Activated B cell treated with CpG ODN at 0.5 μM for 24 hours (primary cell): ENCODE measurements at regions of chr3 and their contacts with region 1.

Region 1: GRCh38 chr3:113745273-113746068 is 578 bp downstream of the NAA50 start:
- DNase-seq: peak; percentile 70
- ATAC-seq: peak; percentile 63
- H3K4me3 Mint-ChIP-seq: peak overlapping the region; percentile 93
- H3K27ac Mint-ChIP-seq: peak overlapping the region; percentile 100
- H3K4me1 Mint-ChIP-seq: peaks cover 74% of the 10 kb centered on the region
- H3K27me3 Mint-ChIP-seq: no peaks in the 10 kb centered on the region
- CTCF ChIP-seq: no peak

Region 2: DNA sequence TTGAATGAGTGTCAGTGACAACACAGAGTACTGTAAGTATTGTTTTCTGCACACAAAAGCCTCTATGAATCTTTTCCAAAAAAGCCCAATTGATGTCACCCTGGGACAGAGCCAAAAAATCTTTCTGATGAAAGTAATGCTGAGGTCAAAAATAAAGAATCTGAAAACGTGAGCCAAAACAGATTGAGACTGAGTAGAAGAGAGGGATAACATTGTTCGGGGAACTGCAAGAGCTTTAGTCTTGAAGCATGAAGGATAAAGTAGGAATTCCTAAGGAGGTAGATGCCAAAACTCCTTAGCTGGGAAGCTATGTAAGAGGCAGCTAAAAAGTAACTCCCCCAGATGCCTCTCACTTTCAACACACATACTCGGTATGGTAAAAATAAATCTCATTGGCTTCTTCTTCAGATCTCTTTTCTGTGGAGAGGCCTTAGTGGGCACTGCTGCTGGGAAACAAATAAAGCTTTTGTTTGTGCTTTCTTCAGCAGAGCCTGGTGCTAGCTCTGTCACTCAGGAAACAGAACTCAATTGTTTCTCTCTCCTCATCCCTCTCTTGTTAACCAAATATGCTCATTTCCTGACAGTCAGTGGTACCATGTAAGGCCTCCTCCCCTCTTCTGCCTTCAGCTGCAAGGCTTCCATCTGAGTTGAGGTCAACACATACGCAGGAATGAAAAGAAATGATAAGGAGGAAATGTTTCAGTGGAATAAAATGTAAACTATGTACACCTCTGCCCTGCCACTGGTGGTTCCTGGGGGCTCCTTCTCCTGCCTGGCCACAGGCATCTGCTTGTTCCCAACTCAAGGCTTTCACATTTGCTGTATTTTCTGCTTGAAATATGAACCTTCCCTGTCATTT is 1354.5 kb before region 1 on chr3:
- CTCF ChIA-PET with region 1: no interaction called
- POLR2A ChIA-PET with region 1: no interaction called
- intact Hi-C with region 1: no loop called
- DNase-seq: no peak
- ATAC-seq: no peak
- H3K4me3 Mint-ChIP-seq: no peak overlapping the region
- H3K27ac Mint-ChIP-seq: peak overlapping the region; percentile 78
- H3K4me1 Mint-ChIP-seq: peaks cover 40% of the 10 kb centered on the region
- H3K27me3 Mint-ChIP-seq: no peaks in the 10 kb centered on the region
- CTCF ChIP-seq: no peak

Region 3: GRCh38 chr3:112561731-112562688 is 1183.5 kb before region 1 on chr3 and contains the starts of genes ATG3 and SLC35A5:
- CTCF ChIA-PET with region 1: no interaction called
- POLR2A ChIA-PET with region 1: no interaction called
- intact Hi-C with region 1: loop called (anchors 5 kb)
- DNase-seq: peak; percentile 99
- ATAC-seq: peak; percentile 80
- H3K4me3 Mint-ChIP-seq: peak within 1 kb of the TSS; percentile 99
- H3K27ac Mint-ChIP-seq: peak within 1 kb of the TSS; percentile 99
- H3K4me1 Mint-ChIP-seq: peaks cover 50% of the 10 kb centered on the region
- H3K27me3 Mint-ChIP-seq: no peaks in the 10 kb centered on the region
- CTCF ChIP-seq: no peak
- total RNA-seq, gene ATG3: 48.3 and 54.9 TPM in 2 replicates
- total RNA-seq, gene SLC35A5: 25.1 and 26.6 TPM in 2 replicates

Region 4: DNA sequence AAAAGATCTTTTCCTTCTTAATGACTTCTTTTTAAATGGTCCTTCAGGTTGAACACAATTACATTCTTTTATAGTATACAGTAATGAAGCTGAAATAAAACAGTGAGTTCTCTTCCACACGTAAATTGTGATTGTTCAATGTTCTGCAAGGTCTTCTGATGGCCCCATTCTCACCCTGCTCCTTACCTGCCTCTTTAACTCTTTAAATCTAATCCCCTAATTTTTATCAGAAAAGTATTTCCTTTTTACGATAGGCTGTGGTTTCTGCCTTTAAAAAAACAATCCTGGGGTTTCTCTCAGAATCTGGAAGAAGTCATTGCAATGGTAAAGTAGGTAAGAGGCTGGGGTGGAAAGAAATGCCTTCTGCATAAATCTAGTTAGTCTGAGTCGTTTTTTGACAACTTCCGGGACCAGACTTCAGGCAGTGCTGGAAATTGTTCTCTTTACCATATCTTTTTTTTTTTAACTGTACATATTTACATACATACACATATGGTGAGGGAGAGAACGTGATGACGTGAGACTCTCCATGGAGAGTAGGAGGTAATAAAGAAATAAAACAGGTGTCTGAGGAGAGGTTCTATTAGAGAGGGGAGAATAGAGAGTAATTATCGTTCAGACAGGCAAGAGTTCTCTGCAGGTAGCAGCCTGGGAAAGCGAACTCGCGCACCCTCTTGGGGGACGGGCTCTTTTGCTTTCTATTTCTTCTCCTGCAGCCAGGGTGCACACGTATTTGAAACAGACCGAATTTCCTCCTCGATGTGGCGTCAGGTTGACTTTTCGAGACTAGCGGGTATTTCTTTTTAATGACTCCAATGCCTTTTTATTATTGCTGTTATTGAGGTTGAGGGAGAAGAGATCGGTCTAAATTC is 213.4 kb before region 1 on chr3 and contains the start of gene SIDT1:
- CTCF ChIA-PET with region 1: no interaction called
- POLR2A ChIA-PET with region 1: no interaction called
- intact Hi-C with region 1: loop called (anchors 1 kb)
- DNase-seq: peak; percentile 49
- ATAC-seq: peak; percentile 80
- H3K4me3 Mint-ChIP-seq: peak within 1 kb of the TSS; percentile 98
- H3K27ac Mint-ChIP-seq: peak within 1 kb of the TSS; percentile 100
- H3K4me1 Mint-ChIP-seq: peaks cover 47% of the 10 kb centered on the region
- H3K27me3 Mint-ChIP-seq: peaks cover 2% of the 10 kb centered on the region
- CTCF ChIP-seq: no peak
- total RNA-seq, gene SIDT1: 35.7 and 44.9 TPM in 2 replicates

Region 5: DNA sequence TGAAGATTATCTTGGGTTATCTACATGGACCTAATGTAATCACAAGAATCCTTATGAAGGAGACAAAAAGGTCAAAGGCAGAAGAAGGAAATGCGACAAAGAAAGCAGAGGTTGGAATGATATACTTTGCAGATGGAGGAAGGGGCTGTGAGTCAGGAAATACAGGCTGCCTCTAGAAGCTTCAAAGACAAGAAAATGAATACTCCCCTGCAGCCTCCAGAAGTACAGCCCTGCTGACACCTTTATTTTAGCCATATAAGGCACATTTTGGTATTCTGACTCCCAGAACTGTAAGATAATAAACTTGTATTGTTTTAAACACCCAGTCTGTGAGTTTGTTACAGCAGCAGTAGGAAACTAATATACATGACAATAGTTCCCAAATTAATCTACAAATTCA is 154.5 kb before region 1 on chr3:
- CTCF ChIA-PET with region 1: no interaction called
- POLR2A ChIA-PET with region 1: no interaction called
- intact Hi-C with region 1: no loop called
- DNase-seq: no peak
- ATAC-seq: no peak
- H3K4me3 Mint-ChIP-seq: no peak overlapping the region
- H3K27ac Mint-ChIP-seq: no peak overlapping the region
- H3K4me1 Mint-ChIP-seq: no peaks in the 10 kb centered on the region
- H3K27me3 Mint-ChIP-seq: no peaks in the 10 kb centered on the region
- CTCF ChIP-seq: no peak

Region 6: DNA sequence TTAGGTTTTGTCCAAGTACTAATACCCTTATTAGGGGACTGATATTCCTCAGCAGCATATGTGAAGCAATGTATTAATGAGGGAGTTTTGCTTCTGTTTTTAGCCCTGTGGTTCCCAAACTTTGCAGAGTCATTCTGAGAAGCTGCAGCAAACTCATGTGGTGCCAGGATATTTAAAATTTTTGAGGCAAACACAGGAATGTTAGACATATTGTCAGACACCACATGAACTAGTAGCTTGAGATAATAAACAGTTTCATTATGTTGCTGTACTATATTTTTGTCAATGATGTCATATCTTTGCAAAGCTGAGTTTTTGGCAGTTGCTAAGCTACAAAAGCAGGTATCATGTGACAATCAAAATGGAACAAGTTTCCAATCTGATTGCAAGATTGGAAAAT is 38.0 kb after region 1 on chr3:
- CTCF ChIA-PET with region 1: interaction called, 3 read pairs
- POLR2A ChIA-PET with region 1: interaction called, 11 read pairs
- intact Hi-C with region 1: loop called (anchors 2 kb)
- DNase-seq: no peak
- ATAC-seq: peak; percentile 45
- H3K4me3 Mint-ChIP-seq: no peak overlapping the region
- H3K27ac Mint-ChIP-seq: no peak overlapping the region
- H3K4me1 Mint-ChIP-seq: peaks cover 13% of the 10 kb centered on the region
- H3K27me3 Mint-ChIP-seq: no peaks in the 10 kb centered on the region
- CTCF ChIP-seq: no peak

Region 7: DNA sequence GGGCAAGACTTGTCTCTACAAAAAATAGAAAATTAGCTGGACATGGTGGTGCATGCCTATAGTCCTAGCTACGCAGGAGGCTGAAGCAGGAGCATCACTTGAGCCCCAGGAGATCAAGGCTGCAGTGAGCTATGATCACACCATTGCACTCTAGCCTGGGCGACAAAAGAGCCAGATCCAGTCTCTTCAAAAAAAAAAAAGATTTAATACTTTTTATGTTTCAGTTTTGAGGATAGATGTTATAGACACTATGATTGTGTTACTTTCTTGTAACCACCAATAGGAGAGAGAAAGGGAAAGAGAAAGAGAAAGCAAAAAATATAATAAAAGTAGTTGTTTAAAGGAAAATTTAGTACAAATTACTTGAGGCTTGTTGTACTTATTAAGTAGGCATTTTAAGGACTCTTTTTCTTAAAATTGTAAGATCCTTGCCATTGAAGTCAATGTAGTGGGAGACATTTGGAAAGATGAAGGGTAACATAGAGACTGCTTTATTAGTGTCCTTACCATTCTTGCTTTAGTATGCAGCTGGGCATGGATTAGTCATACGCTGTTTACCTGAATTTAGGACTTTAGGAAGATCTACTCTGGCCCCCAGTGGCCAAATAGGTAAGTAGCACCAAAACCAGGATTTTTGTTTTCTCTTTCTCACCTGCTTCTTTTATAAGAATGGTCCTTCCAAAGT is 167.2 kb after region 1 on chr3:
- CTCF ChIA-PET with region 1: interaction called, 12 read pairs
- POLR2A ChIA-PET with region 1: interaction called, 3 read pairs
- intact Hi-C with region 1: loop called (anchors 2 kb)
- DNase-seq: no peak
- ATAC-seq: peak; percentile 97
- H3K4me3 Mint-ChIP-seq: peak overlapping the region; percentile 42
- H3K27ac Mint-ChIP-seq: no peak overlapping the region
- H3K4me1 Mint-ChIP-seq: peaks cover 6% of the 10 kb centered on the region
- H3K27me3 Mint-ChIP-seq: no peaks in the 10 kb centered on the region
- CTCF ChIP-seq: no peak

Region 8: GRCh38 chr3:114056130-114057010 is 310.9 kb after region 1 on chr3 and contains the starts of genes CCDC191 and QTRT2:
- CTCF ChIA-PET with region 1: no interaction called
- POLR2A ChIA-PET with region 1: interaction called, 17 read pairs
- intact Hi-C with region 1: loop called (anchors 1 kb)
- DNase-seq: peak; percentile 89
- ATAC-seq: peak; percentile 95
- H3K4me3 Mint-ChIP-seq: peak within 1 kb of the TSS; percentile 99
- H3K27ac Mint-ChIP-seq: peak within 1 kb of the TSS; percentile 99
- H3K4me1 Mint-ChIP-seq: peaks cover 55% of the 10 kb centered on the region
- H3K27me3 Mint-ChIP-seq: peaks cover 3% of the 10 kb centered on the region
- CTCF ChIP-seq: no peak
- total RNA-seq, gene CCDC191: 14.7 and 17.2 TPM in 2 replicates
- total RNA-seq, gene QTRT2: 63.1 and 75.5 TPM in 2 replicates

Region 9: DNA sequence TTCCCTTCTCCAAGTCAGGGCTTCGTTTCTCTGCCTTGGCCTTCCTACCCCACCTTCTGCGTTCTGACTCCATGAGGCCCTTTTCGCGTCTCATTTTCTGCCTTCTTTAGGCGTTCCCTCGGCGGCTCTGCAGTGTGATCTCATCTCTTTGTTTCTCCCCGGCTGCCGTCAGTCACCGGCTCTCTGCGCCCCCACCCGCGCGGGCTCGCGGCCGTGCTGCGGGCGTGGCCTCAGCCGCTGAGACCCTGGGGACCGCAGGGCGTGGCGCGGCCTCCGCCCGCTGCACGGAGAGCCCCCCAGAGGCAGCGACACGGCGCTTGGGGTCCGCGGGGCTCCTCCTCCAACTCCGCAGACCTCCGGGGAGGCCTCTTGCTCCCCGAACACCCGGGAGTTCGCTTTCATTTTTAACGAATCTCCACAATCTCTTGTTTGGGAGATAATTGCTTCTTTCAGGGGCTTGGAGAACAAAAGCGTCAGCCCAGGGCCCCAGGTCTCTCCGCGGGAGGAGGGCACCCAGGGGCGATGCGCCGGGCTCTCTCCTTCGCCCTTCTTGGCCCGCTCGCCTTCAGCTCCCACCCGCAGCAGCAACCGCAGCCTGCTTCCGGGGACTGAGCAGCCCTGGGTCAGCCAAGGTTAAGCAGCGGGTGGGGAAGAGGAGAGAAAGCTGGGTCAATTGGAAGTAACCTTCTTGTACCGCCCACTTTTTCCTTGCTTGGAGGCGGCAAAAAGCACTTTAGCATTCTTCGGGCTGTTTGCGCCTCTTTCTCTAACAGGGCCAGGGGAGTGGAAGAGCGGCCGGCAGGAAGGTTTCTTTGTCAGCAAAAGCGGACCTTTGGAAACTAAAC is 1913.1 kb after region 1 on chr3:
- CTCF ChIA-PET with region 1: no interaction called
- POLR2A ChIA-PET with region 1: no interaction called
- intact Hi-C with region 1: loop called (anchors 1 kb)
- DNase-seq: peak; percentile 80
- ATAC-seq: peak; percentile 94
- H3K4me3 Mint-ChIP-seq: peak overlapping the region; percentile 94
- H3K27ac Mint-ChIP-seq: peak overlapping the region; percentile 99
- H3K4me1 Mint-ChIP-seq: peaks cover 45% of the 10 kb centered on the region
- H3K27me3 Mint-ChIP-seq: no peaks in the 10 kb centered on the region
- CTCF ChIP-seq: no peak